ENCODE measurements at regions of chr1 and their contacts with region 1.

Region 1: DNA sequence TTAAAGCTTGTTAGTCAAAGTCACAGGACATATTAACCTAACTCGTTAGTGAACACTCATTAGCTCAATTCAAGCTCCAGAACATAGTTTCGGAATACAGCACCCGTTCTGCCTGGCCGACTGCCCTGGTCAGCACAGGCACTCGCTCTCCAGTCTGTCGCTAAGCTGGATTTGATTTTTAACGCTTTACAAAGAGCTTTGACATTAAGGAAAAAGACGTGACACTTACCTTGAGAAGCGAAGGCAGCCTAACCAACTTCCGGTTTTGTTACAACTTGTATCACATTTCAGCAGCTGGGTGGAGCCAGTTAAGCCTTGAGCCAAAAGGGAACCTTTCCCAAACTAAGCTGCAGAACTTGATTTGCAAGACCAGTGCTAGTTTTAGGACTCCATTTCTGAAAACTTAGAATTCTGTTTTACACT is at the start of gene FRRS1:
- DNase-seq: peak; percentile 34
- H3K4me3 Mint-ChIP-seq: peak within 1 kb of the TSS; percentile 81
- H3K27ac Mint-ChIP-seq: no peak within 1 kb of the TSS
- H3K4me1 Mint-ChIP-seq: peaks cover 6% of the 10 kb centered on the region
- H3K27me3 Mint-ChIP-seq: peaks cover 47% of the 10 kb centered on the region
- total RNA-seq, gene FRRS1: 0.07 and 0.62 TPM in 2 replicates

Region 2: DNA sequence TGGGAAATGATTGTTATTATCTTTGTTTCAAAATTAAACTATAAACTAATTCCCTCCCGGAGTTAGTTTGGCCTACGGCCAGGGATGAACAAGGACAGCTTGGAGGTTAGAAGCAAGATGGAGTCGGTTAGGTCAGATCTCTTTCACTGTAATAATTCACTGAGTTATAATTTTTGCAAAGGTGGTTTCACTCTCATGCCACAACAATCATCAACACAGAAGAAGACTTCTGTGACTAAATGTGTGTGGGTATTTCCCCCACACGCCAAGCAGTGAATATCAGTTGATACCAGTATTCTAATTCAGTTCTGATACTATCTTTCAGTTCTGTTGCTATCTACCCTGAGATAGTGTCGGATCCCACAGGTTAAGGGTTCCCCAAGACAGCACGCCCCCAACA is 1685.5 kb after region 1 on chr1:
- intact Hi-C with region 1: loop called (anchors 5 kb)
- DNase-seq: no peak
- H3K4me3 Mint-ChIP-seq: no peak overlapping the region
- H3K27ac Mint-ChIP-seq: no peak overlapping the region
- H3K4me1 Mint-ChIP-seq: peaks cover 34% of the 10 kb centered on the region
- H3K27me3 Mint-ChIP-seq: peaks cover 7% of the 10 kb centered on the region